ENCODE measurements at regions of chr4 and their contacts with region 1.

Region 1: DNA sequence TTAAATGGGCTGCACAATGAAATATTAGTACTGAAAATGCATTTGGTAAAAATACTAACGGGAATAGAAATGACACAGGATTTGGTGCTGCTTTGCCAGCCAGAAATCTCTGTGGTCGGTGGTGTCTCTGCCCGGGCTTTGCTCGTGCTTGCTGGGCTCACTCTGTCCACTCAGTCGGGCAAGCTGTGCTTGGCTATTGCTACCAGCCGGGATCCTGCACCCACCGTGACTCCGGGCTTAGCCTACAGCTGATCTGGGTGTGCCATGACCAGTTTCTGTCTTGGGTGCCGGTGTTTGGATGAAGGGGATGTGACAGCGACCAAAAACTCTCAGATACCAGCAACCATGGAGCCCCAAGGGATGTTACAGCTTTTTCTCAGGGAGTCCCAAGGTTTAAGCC is 487.7 kb downstream of the TECRL start:
- DNase-seq: no peak
- ATAC-seq: no peak
- H3K4me3 ChIP-seq: no peak overlapping the region
- H3K27ac ChIP-seq: no peak overlapping the region
- H3K4me1 ChIP-seq: no peaks in the 10 kb centered on the region
- H3K27me3 ChIP-seq: no peaks in the 10 kb centered on the region
- CTCF ChIP-seq: no peak
- POLR2A ChIP-seq: no peak

Region 2: GRCh38 chr4:62656006-62656405 is 1265.6 kb before region 1 on chr4:
- in situ Hi-C with region 1: no loop called
- intact Hi-C with region 1: no loop called
- DNase-seq: no peak
- ATAC-seq: no peak
- H3K4me3 ChIP-seq: no peak overlapping the region
- H3K27ac ChIP-seq: no peak overlapping the region
- H3K4me1 ChIP-seq: no peaks in the 10 kb centered on the region
- H3K27me3 ChIP-seq: no peaks in the 10 kb centered on the region
- CTCF ChIP-seq: no peak
- POLR2A ChIP-seq: no peak

Region 3: GRCh38 chr4:64001229-64001898 is 79.8 kb after region 1 on chr4:
- in situ Hi-C with region 1: loop called in 1 of 4 experiments (anchors 25 kb)
- intact Hi-C with region 1: no loop called
- DNase-seq: no peak
- ATAC-seq: no peak
- H3K4me3 ChIP-seq: no peak overlapping the region
- H3K27ac ChIP-seq: no peak overlapping the region
- H3K4me1 ChIP-seq: no peaks in the 10 kb centered on the region
- H3K27me3 ChIP-seq: no peaks in the 10 kb centered on the region
- CTCF ChIP-seq: no peak
- POLR2A ChIP-seq: no peak

Measured in gastrocnemius medialis (tissue), 4 donors.